PC-9 (cell line): ENCODE measurements at regions of chr3 and their contacts with region 1.

Region 1: DNA sequence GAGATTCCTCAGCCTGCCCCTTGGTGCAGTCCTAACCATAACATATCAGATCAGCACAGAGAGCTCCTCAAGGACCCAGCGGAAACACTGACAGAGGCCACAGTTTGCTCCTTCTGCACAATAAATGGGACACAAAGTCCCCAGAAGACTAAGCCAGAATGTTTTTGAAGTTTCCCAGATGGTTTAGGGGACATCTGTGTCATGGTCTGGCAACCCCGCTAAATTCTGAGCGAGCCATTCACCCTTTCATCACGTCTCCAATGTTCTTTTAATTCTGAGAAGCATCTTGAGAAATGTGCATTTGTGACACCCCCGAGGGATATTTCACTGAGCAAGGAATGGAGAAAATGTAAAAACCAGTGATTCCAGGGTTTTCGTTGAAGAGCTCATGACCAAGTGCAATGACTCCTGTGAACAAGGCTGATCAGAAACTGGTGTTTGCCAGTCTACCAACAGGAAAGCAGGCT is 64.9 kb upstream of the LMCD1 start:
- DNase-seq: no peak
- H3K4me3 ChIP-seq: no peak overlapping the region
- H3K27ac ChIP-seq: no peak overlapping the region
- H3K4me1 ChIP-seq: no peaks in the 10 kb centered on the region
- H3K27me3 ChIP-seq: no peaks in the 10 kb centered on the region
- CTCF ChIP-seq: no peak

Region 2: DNA sequence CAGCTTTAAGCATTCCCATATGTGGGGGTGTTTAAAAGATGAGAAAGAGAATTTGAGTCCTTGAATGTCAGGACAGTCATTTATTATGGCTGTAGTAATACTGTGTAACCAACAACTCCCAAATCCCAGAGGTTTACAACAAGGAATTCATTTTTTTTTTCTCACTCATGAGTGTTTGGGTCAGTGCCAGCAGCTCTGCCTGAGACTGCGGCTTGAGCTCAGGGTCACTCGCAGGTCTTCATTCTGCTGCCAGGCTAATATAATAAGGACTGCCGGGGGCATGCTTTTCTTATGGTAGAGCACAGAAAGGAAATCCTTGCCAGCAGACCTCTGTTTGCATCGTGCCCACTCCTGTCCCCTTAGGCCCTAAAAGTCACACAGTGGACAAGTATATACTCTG is 213.0 kb before region 1 on chr3:
- CTCF ChIA-PET with region 1: no interaction called
- POLR2A ChIA-PET with region 1: no interaction called
- intact Hi-C with region 1: no loop called
- DNase-seq: no peak
- H3K4me3 ChIP-seq: no peak overlapping the region
- H3K27ac ChIP-seq: no peak overlapping the region
- H3K4me1 ChIP-seq: no peaks in the 10 kb centered on the region
- H3K27me3 ChIP-seq: no peaks in the 10 kb centered on the region
- CTCF ChIP-seq: no peak

Region 3: DNA sequence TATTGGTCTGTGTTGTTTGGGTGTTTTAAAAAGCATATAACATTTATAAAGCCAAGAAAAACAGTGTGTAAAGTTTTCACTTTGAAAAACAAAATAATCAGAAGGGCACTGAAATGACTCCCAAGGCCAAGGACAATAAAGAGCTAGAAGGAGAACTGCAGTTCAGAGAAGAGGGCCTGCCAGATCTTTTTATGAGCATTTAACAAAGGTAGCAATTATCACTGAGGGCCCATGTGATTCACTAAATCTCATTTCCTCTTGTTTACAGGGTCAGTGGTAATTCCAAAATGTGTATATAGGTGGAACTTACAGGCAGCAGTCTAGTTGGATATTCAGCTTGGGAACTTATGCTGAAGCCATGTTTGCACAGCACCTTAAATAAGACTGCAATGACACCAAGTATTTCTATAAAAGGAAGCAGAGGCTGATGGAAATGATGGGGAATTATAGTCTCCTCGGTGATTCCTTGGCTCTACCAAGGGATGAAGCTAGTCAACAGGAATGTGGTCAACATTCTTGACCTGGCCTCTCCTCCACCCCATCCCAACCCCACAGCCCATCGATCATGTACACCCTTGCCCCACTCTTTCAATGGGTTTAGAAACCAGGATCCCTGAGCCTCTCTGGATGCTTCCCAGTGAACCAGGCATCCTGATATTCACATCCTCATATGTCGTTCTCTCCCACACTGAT is 871.7 kb after region 1 on chr3:
- CTCF ChIA-PET with region 1: no interaction called
- POLR2A ChIA-PET with region 1: no interaction called
- intact Hi-C with region 1: loop called (anchors 5 kb)
- DNase-seq: peak in 1 of 2 experiments; percentile 52
- H3K4me3 ChIP-seq: no peak overlapping the region
- H3K27ac ChIP-seq: no peak overlapping the region
- H3K4me1 ChIP-seq: no peaks in the 10 kb centered on the region
- H3K27me3 ChIP-seq: no peaks in the 10 kb centered on the region
- CTCF ChIP-seq: no peak